G401 (cell line): ENCODE measurements at regions of chr22 and their contacts with region 1.

Region 1: DNA sequence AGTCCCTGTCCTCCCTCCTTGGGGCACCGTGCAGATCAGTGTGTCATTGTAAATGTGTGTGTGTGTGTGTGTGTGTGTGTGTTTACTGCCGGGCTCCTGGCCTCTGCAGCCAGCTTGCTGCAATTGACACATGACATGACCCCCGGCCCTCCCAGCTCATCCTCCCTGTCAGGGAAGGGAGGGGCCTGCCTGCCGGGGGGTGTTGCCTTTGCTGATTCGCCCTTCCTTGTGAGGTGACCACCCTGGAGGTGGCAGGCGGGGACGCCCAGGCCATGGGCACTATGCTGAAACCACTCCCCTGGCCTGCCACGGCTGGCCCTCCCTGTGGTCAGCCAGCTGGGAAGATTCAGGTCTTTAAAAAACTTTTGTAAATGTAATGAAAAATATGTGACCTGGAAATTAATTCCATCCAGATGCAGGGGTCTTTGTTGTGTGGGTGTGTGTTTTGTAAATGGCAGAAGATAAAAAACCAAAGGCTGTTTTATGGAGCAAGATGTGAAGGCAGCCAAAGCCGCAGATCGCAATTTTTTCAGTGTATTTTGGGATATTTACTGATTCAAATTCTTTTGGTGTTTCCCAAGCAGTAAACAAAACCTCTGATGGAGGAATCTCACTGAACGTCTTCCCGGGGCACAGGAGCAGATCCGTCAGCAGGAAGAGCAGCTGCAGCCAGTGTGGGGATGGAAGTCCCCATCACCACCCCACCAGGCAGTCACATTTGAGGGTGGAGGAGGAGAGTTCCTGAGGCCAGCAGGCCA is 23.2 kb downstream of the SHISAL1 start:
- DNase-seq: no peak

Region 2: GRCh38 chr22:44202261-44202789 is 87.3 kb before region 1 on chr22:
- in situ Hi-C with region 1: no loop called
- DNase-seq: no peak

Region 3: DNA sequence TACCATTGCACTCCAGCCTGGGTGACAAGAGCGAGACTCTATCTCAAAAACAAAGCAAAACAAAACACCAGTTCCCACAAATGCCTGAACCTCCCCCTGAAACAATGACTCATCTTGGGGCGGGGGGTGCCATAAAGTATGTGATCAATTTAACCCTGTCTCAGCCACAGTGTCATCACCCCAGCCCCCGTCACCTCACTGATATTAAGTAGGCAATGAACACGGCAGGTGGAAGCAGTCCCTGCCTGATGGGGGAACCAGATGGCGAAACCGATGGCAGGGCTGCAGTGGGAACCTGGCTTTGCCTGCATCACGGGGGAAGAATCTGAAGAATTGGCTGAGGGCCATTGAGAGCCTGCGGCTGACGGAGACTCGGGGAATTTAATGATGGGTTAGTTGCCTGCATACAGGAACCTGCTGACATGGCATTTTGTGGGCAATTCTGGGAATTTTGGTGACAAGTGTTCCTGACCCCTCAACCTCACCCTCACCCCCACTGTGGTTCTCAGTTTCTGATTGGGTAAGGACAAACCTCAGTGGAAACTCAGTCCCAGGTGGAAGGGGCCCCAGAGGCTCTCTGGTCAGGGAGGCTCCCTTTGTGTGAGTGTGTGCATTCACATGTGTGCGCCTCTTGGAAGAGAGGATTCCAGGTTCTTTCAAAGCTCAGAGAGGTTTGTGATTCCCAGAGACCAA is 62.2 kb after region 1 on chr22:
- in situ Hi-C with region 1: loop called (anchors 10 kb)
- DNase-seq: peak; percentile 88